Heart right ventricle (tissue), 16 donors: ENCODE measurements at regions of chr15 and their contacts with region 1.

Region 1: DNA sequence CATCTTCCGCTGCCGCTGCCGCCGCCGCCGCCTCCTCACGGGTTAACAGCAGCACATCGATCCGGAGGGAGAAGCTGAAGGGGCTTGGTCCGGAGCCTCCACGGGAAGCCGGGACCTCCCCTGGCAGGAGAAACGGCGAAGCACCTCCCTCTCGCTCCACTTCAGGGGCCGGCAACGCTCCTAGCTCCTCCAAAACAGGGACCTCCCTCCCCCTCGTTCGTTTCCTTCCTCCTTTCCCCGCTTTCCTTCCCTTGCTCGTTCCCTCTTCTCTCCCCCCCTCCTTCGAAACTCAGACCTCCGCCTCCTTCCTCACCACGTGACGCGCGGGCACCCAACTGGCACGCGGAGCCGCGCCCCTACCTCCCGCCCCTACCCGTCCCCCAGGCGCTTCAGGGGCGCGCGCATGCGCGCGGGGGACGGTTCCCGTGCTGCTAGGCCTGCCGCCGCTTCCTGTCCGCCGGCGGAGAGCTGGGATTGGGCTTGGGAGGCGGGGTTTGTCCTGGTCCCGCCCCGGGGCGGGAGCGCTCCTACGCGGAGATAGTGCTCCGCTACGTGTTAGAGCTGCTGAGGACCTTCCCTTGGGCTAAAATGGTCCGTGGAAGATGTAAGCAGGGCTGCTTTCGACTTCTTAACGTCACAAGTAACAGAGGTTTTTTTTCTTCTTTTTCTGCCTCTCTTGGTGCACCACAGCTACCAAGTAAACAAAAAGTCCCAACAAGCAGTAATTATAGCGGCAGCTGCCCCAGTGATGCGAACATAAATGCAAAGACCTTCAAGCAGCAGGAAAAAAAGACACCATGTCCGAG is at the start of gene ADAM10:
- DNase-seq: peak; percentile 98 to 100
- ATAC-seq: peak; percentile 98 to 100 (median 98)
- H3K4me3 ChIP-seq: peak within 1 kb of the TSS; percentile 70 to 97 (median 94)
- H3K27ac ChIP-seq: peak within 1 kb of the TSS; percentile 96 to 99 (median 98)
- H3K4me1 ChIP-seq: peaks cover 0 to 42% (median 37%) of the 10 kb centered on the region in 9 donors
- H3K27me3 ChIP-seq: no peaks in the 10 kb centered on the region
- CTCF ChIP-seq: peak in 1 of 9 donors; percentile 20
- total RNA-seq, gene ADAM10: 68.3 to 110 (median 81.0) TPM

Region 2: GRCh38 chr15:58269455-58270414 is 480.0 kb before region 1 on chr15:
- intact Hi-C with region 1: loop called in 2 of 10 experiments (anchors 10 kb)
- DNase-seq: peak in 1 of 2 donors; percentile 56
- ATAC-seq: peak; percentile 77 to 96 (median 92)
- H3K4me3 ChIP-seq: no peak overlapping the region
- H3K27ac ChIP-seq: no peak overlapping the region
- H3K4me1 ChIP-seq: peaks cover 0 to 10% (median 0%) of the 10 kb centered on the region in 9 donors
- H3K27me3 ChIP-seq: no peaks in the 10 kb centered on the region
- CTCF ChIP-seq: peak; percentile 60 to 86 (median 79)

Region 3: GRCh38 chr15:58438956-58439355 is 310.8 kb before region 1 on chr15:
- intact Hi-C with region 1: loop called in 5 of 10 experiments (anchors 10 kb)
- DNase-seq: peak in 1 of 2 donors; percentile 65
- ATAC-seq: peak; percentile 56 to 89 (median 76)
- H3K4me3 ChIP-seq: no peak overlapping the region
- H3K27ac ChIP-seq: peak overlapping the region in 8 of 10 donors; percentile 75 to 89 (median 84)
- H3K4me1 ChIP-seq: peaks cover 23 to 47% (median 40%) of the 10 kb centered on the region in 9 donors
- H3K27me3 ChIP-seq: no peaks in the 10 kb centered on the region
- CTCF ChIP-seq: peak in 5 of 9 donors; percentile 30 to 57 (median 50)

Region 4: DNA sequence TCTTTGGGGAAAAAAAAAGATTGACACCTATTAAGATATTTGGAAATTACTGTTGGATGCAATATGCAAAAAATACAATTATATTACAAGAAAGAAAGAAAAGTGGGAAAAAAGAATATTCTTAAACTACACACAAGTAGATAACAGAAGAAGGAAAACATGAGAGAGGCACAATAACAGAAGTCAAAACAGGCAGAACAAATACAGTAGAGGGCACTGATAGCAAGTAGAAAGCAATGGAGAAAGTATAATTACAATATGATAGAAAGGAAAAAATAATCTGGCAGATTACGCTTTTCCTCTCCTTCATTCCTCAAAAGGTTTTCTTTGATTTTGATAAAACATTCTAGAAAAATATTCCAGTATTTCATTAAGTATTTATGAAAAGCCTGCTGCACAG is 72.3 kb before region 1 on chr15:
- intact Hi-C with region 1: loop called in 2 of 10 experiments (anchors 5 kb)
- DNase-seq: no peak
- ATAC-seq: no peak
- H3K4me3 ChIP-seq: no peak overlapping the region
- H3K27ac ChIP-seq: no peak overlapping the region
- H3K4me1 ChIP-seq: peaks cover 0 to 37% (median 19%) of the 10 kb centered on the region in 9 donors
- H3K27me3 ChIP-seq: no peaks in the 10 kb centered on the region
- CTCF ChIP-seq: peak in 7 of 9 donors; percentile 17 to 56 (median 34)

Region 5: DNA sequence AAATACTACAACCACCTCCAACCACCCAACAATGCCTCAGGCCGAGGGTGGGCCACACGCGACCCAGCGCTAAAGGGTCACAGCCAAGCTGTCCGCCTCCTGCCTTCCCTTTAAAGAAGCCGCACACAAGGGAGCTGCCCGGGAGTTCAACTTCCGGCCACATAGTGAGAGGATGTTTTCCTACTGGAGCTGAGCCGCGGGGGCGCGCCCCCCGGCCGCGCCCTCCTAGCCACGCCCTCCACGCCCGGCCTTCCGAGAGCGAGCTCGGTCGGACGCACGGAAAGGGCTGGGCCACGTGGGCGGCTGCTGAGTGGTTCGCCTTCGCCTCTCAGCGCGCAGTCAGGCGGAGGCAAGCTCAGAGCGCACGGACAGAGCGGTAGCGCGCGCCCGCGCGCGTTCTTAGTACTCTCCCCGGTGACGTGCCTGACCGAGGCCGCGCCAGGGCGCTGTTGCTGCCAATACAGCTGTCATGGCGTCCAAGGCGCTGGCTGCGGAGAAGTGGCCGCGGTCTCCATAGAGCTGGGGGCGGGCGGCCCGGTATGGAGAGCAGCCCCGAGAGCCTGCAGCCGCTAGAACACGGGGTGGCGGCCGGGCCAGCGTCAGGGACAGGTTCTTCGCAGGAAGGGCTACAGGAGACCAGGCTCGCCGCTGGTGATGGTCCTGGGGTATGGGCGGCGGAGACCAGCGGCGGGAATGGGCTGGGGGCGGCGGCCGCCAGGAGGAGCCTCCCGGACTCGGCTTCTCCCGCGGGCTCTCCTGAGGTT is 21.3 kb after region 1 on chr15 and contains the start of gene MINDY2:
- intact Hi-C with region 1: loop called in 6 of 10 experiments (anchors 1 to 5 kb)
- DNase-seq: peak; percentile 97 to 99
- ATAC-seq: peak; percentile 97 to 99 (median 98)
- H3K4me3 ChIP-seq: peak within 1 kb of the TSS; percentile 77 to 100 (median 90)
- H3K27ac ChIP-seq: peak within 1 kb of the TSS; percentile 89 to 99 (median 98)
- H3K4me1 ChIP-seq: peaks cover 2 to 52% (median 46%) of the 10 kb centered on the region in 9 donors
- H3K27me3 ChIP-seq: no peaks in the 10 kb centered on the region
- CTCF ChIP-seq: peak in 8 of 9 donors; percentile 0 to 55 (median 42)
- total RNA-seq, gene MINDY2: 26.9 to 37.4 (median 32.7) TPM